Vagina (tissue), 2 donors: ENCODE measurements at regions of chr2 and their contacts with region 1.

Region 1: DNA sequence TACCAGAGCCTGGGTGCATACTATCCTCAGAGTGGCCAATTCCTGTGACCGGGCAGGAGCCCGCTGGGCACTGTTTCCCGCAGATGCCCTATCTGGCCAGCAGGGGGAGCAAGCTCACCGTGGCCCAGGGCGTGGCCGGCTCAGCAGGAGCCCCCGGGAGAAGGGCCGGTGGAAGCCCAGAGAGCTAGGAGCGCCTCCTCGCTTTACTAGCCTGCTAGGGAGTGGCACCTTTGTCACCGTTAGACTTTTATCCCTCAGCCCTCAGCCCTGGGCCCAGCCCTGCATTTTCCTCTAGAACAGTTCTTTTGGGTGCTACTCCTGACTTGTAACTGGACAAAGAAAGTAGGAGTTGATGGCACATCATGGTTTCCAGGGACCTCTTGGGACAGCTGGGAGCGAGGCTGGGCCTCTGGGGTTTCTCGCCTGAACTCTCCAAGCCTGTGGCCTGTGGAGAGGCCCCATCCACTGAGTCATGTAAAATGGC is 24.0 kb downstream of the TMEM177 start:
- DNase-seq: no peak
- H3K4me3 ChIP-seq: no peak overlapping the region
- H3K27ac ChIP-seq: no peak overlapping the region
- H3K4me1 ChIP-seq: no peaks in the 10 kb centered on the region
- H3K27me3 ChIP-seq: no peaks in the 10 kb centered on the region
- CTCF ChIP-seq: peak; percentile 82 to 92 (median 88)
- POLR2A ChIP-seq: no peak

Region 2: GRCh38 chr2:120174963-120175581 is 472.1 kb after region 1 on chr2:
- intact Hi-C with region 1: loop called (anchors 10 kb)
- DNase-seq: no peak
- H3K4me3 ChIP-seq: no peak overlapping the region
- H3K27ac ChIP-seq: no peak overlapping the region
- H3K4me1 ChIP-seq: peaks cover 13% of the 10 kb centered on the region
- H3K27me3 ChIP-seq: no peaks in the 10 kb centered on the region
- CTCF ChIP-seq: peak; percentile 51 to 80 (median 72)
- POLR2A ChIP-seq: no peak